PC-9 (cell line): ENCODE measurements at regions of chr11 and their contacts with region 1.

Region 1: GRCh38 chr11:94128746-94129511 is at the start of gene PANX1:
- DNase-seq: peak; percentile 79 to 80
- H3K4me3 ChIP-seq: peak within 1 kb of the TSS; percentile 92
- H3K27ac ChIP-seq: peak within 1 kb of the TSS; percentile 86
- H3K4me1 ChIP-seq: peaks cover 52% of the 10 kb centered on the region
- H3K27me3 ChIP-seq: no peaks in the 10 kb centered on the region
- CTCF ChIP-seq: no peak
- total RNA-seq, gene PANX1: 10.5 and 12.6 TPM in 2 replicates

Region 2: DNA sequence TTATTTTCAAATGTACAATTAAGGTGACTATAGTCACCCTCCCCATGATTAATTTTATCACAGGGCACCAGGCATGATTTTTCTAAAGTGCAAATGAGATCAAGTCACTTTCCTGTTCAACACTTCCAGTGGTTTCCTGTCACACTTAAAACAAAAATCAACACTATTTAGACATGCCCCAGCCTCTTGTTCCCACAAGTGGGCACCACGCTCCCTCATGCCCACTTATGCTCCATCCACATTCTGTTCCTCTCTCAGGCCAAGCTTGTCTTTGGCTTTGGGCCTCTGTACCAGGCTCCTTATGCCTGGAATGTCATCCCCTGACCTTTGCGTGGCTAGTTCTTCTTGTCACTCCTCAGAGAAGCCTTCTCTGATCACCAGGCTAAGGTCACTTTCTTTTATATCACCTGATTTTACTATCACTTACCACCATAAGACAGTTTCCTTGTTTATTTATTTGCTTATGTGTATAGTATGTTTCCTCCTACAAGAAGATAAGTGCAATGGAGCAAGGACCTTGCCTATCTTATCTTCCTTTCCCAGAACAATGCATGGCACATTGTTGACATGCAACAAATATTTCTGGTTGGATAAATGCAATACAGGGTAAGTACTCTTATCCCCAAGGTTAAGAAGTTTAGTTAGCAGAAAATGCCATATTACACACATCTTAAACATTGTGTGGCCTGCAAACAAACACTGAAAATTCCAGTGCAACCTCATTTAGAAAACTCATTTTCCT is 51.2 kb before region 1 on chr11:
- CTCF ChIA-PET with region 1: no interaction called
- POLR2A ChIA-PET with region 1: no interaction called
- intact Hi-C with region 1: no loop called
- DNase-seq: peak in 1 of 2 experiments; percentile 33
- H3K4me3 ChIP-seq: no peak overlapping the region
- H3K27ac ChIP-seq: no peak overlapping the region
- H3K4me1 ChIP-seq: no peaks in the 10 kb centered on the region
- H3K27me3 ChIP-seq: no peaks in the 10 kb centered on the region
- CTCF ChIP-seq: no peak

Region 3: GRCh38 chr11:94151903-94152677 is 23.2 kb after region 1 on chr11:
- CTCF ChIA-PET with region 1: interaction called, 3 read pairs
- POLR2A ChIA-PET with region 1: no interaction called
- intact Hi-C with region 1: loop called (anchors 1 kb)
- DNase-seq: peak; percentile 55 to 97
- H3K4me3 ChIP-seq: no peak overlapping the region
- H3K27ac ChIP-seq: peak overlapping the region; percentile 61
- H3K4me1 ChIP-seq: peaks cover 37% of the 10 kb centered on the region
- H3K27me3 ChIP-seq: no peaks in the 10 kb centered on the region
- CTCF ChIP-seq: 0 out of 2 replicates have a peak, but pooled peaks have one; percentile 10